GM12878 (cell line): ENCODE measurements at regions of chr9 and their contacts with region 1.

Region 1: GRCh38 chr9:109440797-109441287 is 57.3 kb downstream of the PTPN3 start:
- DNase-seq: no peak
- ATAC-seq: peak; percentile 89
- H3K4me3 ChIP-seq: no peak overlapping the region
- H3K27ac ChIP-seq: no peak overlapping the region
- H3K4me1 ChIP-seq: peaks cover 19% of the 10 kb centered on the region
- H3K27me3 ChIP-seq: no peaks in the 10 kb centered on the region
- CTCF ChIP-seq: peak; percentile 73 to 86 (median 85)
- EP300 ChIP-seq: 0 out of 4 replicates have a peak, but pooled peaks of 1 of the 2 experiments have one; percentile 28
- POLR2A ChIP-seq: no peak
- RAD21 ChIP-seq: peak; percentile 84

Region 2: GRCh38 chr9:108786901-108787689 is 653.7 kb before region 1 on chr9:
- CTCF ChIA-PET with region 1: no interaction called
- POLR2A ChIA-PET with region 1: no interaction called
- RAD21 ChIA-PET with region 1: no interaction called
- SMC1A ChIA-PET with region 1: no interaction called
- in situ Hi-C with region 1: no loop called
- intact Hi-C with region 1: no loop called
- DNase-seq: no peak
- ATAC-seq: no peak
- H3K4me3 ChIP-seq: no peak overlapping the region
- H3K27ac ChIP-seq: no peak overlapping the region
- H3K4me1 ChIP-seq: no peaks in the 10 kb centered on the region
- H3K27me3 ChIP-seq: peaks cover 2% of the 10 kb centered on the region in 2 experiments; a peak in 1 of 4 replicates
- CTCF ChIP-seq: no peak
- EP300 ChIP-seq: no peak
- POLR2A ChIP-seq: no peak
- RAD21 ChIP-seq: no peak

Region 3: DNA sequence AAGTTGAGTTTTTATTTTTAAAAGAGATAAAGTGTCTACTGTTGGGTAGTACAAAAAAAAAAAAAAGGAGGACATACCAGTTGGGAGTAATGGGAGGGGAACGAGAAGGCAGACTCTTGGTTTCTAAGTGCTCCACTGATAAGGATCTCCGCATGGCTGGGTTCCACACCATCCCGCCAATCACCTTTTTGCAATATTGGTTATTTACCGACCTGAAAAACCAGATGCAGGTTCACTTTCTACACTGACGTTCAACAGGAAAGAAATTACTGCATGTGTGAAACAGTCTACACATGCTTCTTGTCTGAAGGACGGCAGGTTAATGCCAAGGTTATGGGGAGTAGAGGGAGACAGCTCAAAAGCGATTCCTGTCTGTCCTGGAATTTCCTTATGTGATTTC is 18.2 kb before region 1 on chr9:
- CTCF ChIA-PET with region 1: interaction called, 214 read pairs
- POLR2A ChIA-PET with region 1: interaction called, 7 read pairs
- RAD21 ChIA-PET with region 1: interaction called, 24 read pairs
- SMC1A ChIA-PET with region 1: interaction called, 116 read pairs
- in situ Hi-C with region 1: no loop called
- intact Hi-C with region 1: no loop called
- DNase-seq: peak; percentile 91
- ATAC-seq: peak; percentile 83
- H3K4me3 ChIP-seq: no peak overlapping the region
- H3K27ac ChIP-seq: peak overlapping the region; percentile 23; the same call in 1 of the 2 replicates
- H3K4me1 ChIP-seq: peaks cover 44% of the 10 kb centered on the region
- H3K27me3 ChIP-seq: no peaks in the 10 kb centered on the region
- CTCF ChIP-seq: no peak
- EP300 ChIP-seq: peak; percentile 63 to 68; a peak in 3 of 4 replicates
- POLR2A ChIP-seq: no peak
- RAD21 ChIP-seq: no peak

Region 4: DNA sequence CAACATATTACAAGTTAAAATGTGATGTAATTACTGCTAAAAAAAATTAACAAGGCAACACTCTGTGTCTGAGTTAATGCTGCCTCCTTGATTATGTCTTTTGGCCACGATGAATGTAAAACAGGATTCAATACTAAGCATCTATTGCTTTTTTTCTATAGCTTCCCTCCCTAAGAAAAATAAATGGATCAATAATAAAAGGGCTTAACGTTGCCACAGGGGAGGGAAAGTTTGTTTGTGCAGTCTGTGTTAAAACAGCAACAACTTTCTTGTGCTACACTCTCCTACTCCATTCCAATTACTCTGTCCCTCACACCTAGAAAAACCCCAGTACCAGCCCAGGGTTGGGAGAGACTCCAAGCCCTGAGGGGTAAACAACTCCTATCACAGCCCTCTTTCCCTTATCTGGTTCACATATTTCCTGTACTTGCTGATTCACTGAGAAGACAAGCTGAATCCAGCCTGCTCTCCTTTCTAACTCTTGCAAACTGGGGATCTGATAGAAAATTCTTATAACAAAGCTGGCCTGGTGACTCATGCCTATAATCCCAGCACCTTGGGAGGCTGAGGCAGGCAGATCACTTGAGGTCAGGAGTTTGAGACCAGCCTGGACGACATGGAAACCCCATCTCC is 12.5 kb after region 1 on chr9:
- CTCF ChIA-PET with region 1: interaction called, 18 read pairs
- POLR2A ChIA-PET with region 1: interaction called, 3 read pairs
- RAD21 ChIA-PET with region 1: interaction called, 7 read pairs
- SMC1A ChIA-PET with region 1: interaction called, 6 read pairs
- in situ Hi-C with region 1: no loop called
- intact Hi-C with region 1: no loop called
- DNase-seq: no peak
- ATAC-seq: no peak
- H3K4me3 ChIP-seq: no peak overlapping the region
- H3K27ac ChIP-seq: no peak overlapping the region
- H3K4me1 ChIP-seq: no peaks in the 10 kb centered on the region
- H3K27me3 ChIP-seq: no peaks in the 10 kb centered on the region
- CTCF ChIP-seq: no peak
- EP300 ChIP-seq: no peak
- POLR2A ChIP-seq: no peak
- RAD21 ChIP-seq: no peak

Region 5: DNA sequence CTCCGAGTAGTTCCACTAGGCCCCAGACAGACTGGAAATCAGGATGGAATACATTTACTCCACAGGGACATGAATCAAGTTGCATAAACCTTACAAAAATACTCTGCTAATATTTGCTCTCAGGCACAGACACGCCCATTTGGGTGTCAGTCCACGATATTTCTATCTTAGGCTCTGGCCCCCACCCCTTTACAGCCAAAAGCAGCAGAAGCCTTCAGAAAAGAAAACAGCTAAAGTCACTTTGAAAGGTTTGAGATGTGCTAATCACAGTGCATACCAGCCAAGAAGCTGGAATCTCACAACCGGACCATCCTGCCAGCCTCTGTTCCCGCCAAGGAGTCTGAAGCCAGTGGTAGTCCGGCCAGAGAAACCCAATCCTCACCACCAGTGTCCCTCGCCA is 34.7 kb after region 1 on chr9:
- CTCF ChIA-PET with region 1: interaction called, 234 read pairs
- POLR2A ChIA-PET with region 1: interaction called, 4 read pairs
- RAD21 ChIA-PET with region 1: interaction called, 135 read pairs
- SMC1A ChIA-PET with region 1: interaction called, 131 read pairs
- in situ Hi-C with region 1: no loop called
- intact Hi-C with region 1: no loop called
- DNase-seq: no peak
- ATAC-seq: no peak
- H3K4me3 ChIP-seq: no peak overlapping the region
- H3K27ac ChIP-seq: no peak overlapping the region
- H3K4me1 ChIP-seq: no peaks in the 10 kb centered on the region; the same call in 1 of the 2 replicates
- H3K27me3 ChIP-seq: 0 out of 4 replicates have a peak, but pooled peaks cover 0 to 3% of the 10 kb centered on the region in 2 experiments
- CTCF ChIP-seq: no peak
- EP300 ChIP-seq: no peak
- POLR2A ChIP-seq: no peak
- RAD21 ChIP-seq: no peak